OCI-LY7 (cell line): ENCODE measurements at regions of chr17 and their contacts with region 1.

Region 1: GRCh38 chr17:38326996-38327792 is 16.6 kb downstream of the GPR179 start:
- DNase-seq: peak; percentile 75
- H3K4me3 ChIP-seq: peak overlapping the region; percentile 48
- H3K27ac ChIP-seq: peak overlapping the region; percentile 97
- H3K4me1 ChIP-seq: peaks cover 72% of the 10 kb centered on the region
- CTCF ChIP-seq: no peak

Region 2: GRCh38 chr17:38351412-38352222 is 24.4 kb after region 1 on chr17 and contains the start of gene SOCS7:
- CTCF ChIA-PET with region 1: interaction called, 17 read pairs
- POLR2A ChIA-PET with region 1: interaction called, 38 read pairs
- intact Hi-C with region 1: loop called (anchors 1 kb)
- DNase-seq: peak; percentile 93
- H3K4me3 ChIP-seq: peak within 1 kb of the TSS; percentile 89
- H3K27ac ChIP-seq: peak within 1 kb of the TSS; percentile 35
- H3K4me1 ChIP-seq: peaks cover 48% of the 10 kb centered on the region
- CTCF ChIP-seq: no peak
- total RNA-seq, gene SOCS7: 27.0 and 36.1 TPM in 2 replicates